ENCODE measurements at regions of chr17 and their contacts with region 1.

Region 1: GRCh38 chr17:78013683-78014467 is 55.4 kb downstream of the TNRC6C start:
- DNase-seq: peak; percentile 56 to 73
- ATAC-seq: peak; percentile 90 to 91
- H3K4me3 ChIP-seq: no peak overlapping the region
- H3K27ac ChIP-seq: no peak overlapping the region
- H3K4me1 ChIP-seq: no peaks in the 10 kb centered on the region
- CTCF ChIP-seq: peak; percentile 98
- EP300 ChIP-seq: no peak
- POLR2A ChIP-seq: no peak
- RAD21 ChIP-seq: peak; percentile 96 to 97

Region 2: GRCh38 chr17:77331301-77331864 is 682.5 kb before region 1 on chr17:
- CTCF ChIA-PET with region 1: interaction called, 23 read pairs
- POLR2A ChIA-PET with region 1: no interaction called
- DNase-seq: peak; percentile 83 to 97
- ATAC-seq: peak; percentile 76 to 87
- H3K4me3 ChIP-seq: no peak overlapping the region
- H3K27ac ChIP-seq: peak overlapping the region; percentile 50 to 83
- H3K4me1 ChIP-seq: peaks cover 56% of the 10 kb centered on the region
- CTCF ChIP-seq: peak; percentile 97
- EP300 ChIP-seq: no peak
- POLR2A ChIP-seq: no peak
- RAD21 ChIP-seq: peak; percentile 98 to 99

Region 3: GRCh38 chr17:77542551-77543490 is 471.1 kb before region 1 on chr17:
- CTCF ChIA-PET with region 1: interaction called, 316 read pairs
- POLR2A ChIA-PET with region 1: no interaction called
- DNase-seq: peak; percentile 88 to 91
- ATAC-seq: peak; percentile 95 to 97
- H3K4me3 ChIP-seq: no peak overlapping the region
- H3K27ac ChIP-seq: peak overlapping the region; percentile 10 to 48; a peak in 1 of 6 replicates
- H3K4me1 ChIP-seq: peaks cover 16% of the 10 kb centered on the region
- CTCF ChIP-seq: peak; percentile 97
- EP300 ChIP-seq: no peak
- POLR2A ChIP-seq: no peak
- RAD21 ChIP-seq: peak; percentile 99 to 100

Region 4: GRCh38 chr17:77786740-77787505 is 227.0 kb before region 1 on chr17:
- CTCF ChIA-PET with region 1: interaction called, 12 read pairs
- POLR2A ChIA-PET with region 1: no interaction called
- DNase-seq: no peak
- ATAC-seq: no peak
- H3K4me3 ChIP-seq: no peak overlapping the region
- H3K27ac ChIP-seq: no peak overlapping the region
- H3K4me1 ChIP-seq: no peaks in the 10 kb centered on the region
- CTCF ChIP-seq: no peak
- EP300 ChIP-seq: no peak
- POLR2A ChIP-seq: no peak
- RAD21 ChIP-seq: no peak

Region 5: GRCh38 chr17:77963441-77963840 is 50.4 kb before region 1 on chr17:
- CTCF ChIA-PET with region 1: interaction called, 12 read pairs
- POLR2A ChIA-PET with region 1: interaction called, 25 read pairs
- DNase-seq: no peak
- ATAC-seq: no peak
- H3K4me3 ChIP-seq: no peak overlapping the region
- H3K27ac ChIP-seq: no peak overlapping the region
- H3K4me1 ChIP-seq: peaks cover 5% of the 10 kb centered on the region; the same call in 2 of the 3 replicates
- CTCF ChIP-seq: no peak
- EP300 ChIP-seq: no peak
- POLR2A ChIP-seq: no peak
- RAD21 ChIP-seq: no peak

Region 6: GRCh38 chr17:78032166-78032565 is 18.3 kb after region 1 on chr17:
- CTCF ChIA-PET with region 1: interaction called, 259 read pairs
- POLR2A ChIA-PET with region 1: no interaction called
- DNase-seq: no peak
- ATAC-seq: peak in 1 of 2 experiments; percentile 52; a peak in 1 of 6 replicates
- H3K4me3 ChIP-seq: no peak overlapping the region
- H3K27ac ChIP-seq: no peak overlapping the region
- H3K4me1 ChIP-seq: peaks cover 16% of the 10 kb centered on the region
- CTCF ChIP-seq: no peak
- EP300 ChIP-seq: no peak
- POLR2A ChIP-seq: no peak
- RAD21 ChIP-seq: no peak